Activated CD4-positive, alpha-beta memory T cell treated with anti-CD3 and anti-CD28 coated beads, Interleukin-2, amount 10 ng/mL, durations not matched to agents 7 days and 5 days (primary cell): ENCODE measurements at regions of chr17 and their contacts with region 1.

Region 1: GRCh38 chr17:80649678-80650672 is 105.3 kb downstream of the RPTOR start:
- DNase-seq: peak; percentile 74
- H3K4me3 Mint-ChIP-seq: peak overlapping the region; percentile 12
- H3K27ac Mint-ChIP-seq: peak overlapping the region; percentile 81
- H3K4me1 Mint-ChIP-seq: peaks cover 58% of the 10 kb centered on the region
- H3K27me3 Mint-ChIP-seq: no peaks in the 10 kb centered on the region

Region 2: GRCh38 chr17:80637048-80637781 is 12.8 kb before region 1 on chr17:
- CTCF ChIA-PET with region 1: interaction called, 4 read pairs
- POLR2A ChIA-PET with region 1: interaction called, 15 read pairs
- DNase-seq: no peak
- H3K4me3 Mint-ChIP-seq: no peak overlapping the region
- H3K27ac Mint-ChIP-seq: peak overlapping the region; percentile 37
- H3K4me1 Mint-ChIP-seq: peaks cover 4% of the 10 kb centered on the region
- H3K27me3 Mint-ChIP-seq: no peaks in the 10 kb centered on the region

Region 3: DNA sequence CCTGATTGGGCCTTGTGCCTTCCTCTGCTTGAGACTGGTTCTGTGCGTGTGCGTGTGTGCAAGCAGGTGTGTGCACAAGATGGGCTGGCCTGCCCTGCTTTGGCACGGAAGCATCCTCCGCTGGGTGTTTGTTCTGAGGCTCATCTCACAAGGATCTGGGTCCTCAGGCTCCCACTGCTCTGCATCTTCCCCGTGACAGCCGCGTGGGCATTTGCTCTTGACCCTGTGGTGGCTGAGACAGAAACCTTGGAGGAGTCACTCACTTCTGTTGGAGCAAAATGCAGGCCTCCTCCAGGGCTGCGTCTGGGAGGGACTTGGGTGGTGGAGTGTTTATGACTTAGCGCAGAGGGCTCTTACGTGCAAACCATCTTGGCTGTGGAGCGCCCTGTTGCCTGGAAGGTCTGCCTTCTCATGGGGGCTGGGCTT is 13.8 kb after region 1 on chr17:
- CTCF ChIA-PET with region 1: interaction called, 3 read pairs
- POLR2A ChIA-PET with region 1: interaction called, 10 read pairs
- DNase-seq: peak; percentile 32
- H3K4me3 Mint-ChIP-seq: peak overlapping the region; percentile 25
- H3K27ac Mint-ChIP-seq: peak overlapping the region; percentile 89
- H3K4me1 Mint-ChIP-seq: peaks cover 66% of the 10 kb centered on the region
- H3K27me3 Mint-ChIP-seq: no peaks in the 10 kb centered on the region